ENCODE measurements at regions of chrX and their contacts with region 1.

Region 1: DNA sequence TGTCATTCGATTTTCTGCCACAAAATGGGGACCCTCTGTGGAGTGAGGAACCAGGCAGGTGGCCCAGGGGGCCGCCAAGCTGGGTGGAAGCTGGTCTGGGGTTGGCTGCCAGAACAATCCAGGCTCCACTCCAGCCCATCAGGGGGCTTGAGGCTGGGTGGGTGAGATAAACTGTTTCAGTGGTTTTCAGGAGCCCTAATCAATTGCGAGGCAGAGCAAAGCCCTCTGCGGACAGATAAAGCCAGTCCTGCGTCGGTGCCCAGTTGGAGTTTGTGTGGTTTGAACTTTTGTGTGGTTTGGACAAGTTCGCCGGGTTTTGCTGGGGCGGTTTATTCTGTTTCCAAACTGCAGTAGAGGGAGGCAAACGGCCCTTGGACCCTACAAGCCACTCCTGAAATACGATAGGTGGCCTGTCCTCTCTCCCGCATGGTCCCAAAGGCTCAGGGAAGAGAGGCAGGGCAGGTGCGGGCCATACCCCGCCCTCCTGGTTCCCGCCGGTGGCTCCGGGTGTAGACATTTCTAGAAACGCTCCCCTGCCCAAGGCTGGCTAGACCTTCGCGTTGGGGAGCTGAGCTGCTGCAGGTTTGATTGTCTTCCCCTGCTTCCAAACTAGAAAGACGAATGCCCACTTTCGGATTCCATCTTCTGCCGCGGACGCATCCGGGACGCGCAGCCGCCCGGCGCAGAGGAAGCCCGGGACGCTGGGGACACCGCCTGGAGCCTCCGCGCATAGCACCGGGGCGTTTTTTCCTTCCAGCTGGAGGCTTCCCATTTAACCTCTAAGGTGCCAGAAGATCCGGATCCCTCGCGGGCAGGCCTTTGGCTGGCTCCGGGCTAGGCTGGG is 169.0 kb upstream of the BCOR start:
- DNase-seq: peak; percentile 67 to 84 (median 70)
- ATAC-seq: peak; percentile 84 to 92 (median 90)
- H3K4me3 ChIP-seq: peak overlapping the region; percentile 4 to 63 (median 50)
- H3K27ac ChIP-seq: peak overlapping the region in 11 of 12 donors; percentile 21 to 84 (median 60)
- H3K4me1 ChIP-seq: peaks cover 0 to 31% (median 13%) of the 10 kb centered on the region in 12 donors
- H3K27me3 ChIP-seq: peaks cover 0 to 11% (median 0%) of the 10 kb centered on the region in 9 donors
- CTCF ChIP-seq: peak; percentile 47 to 76 (median 61)
- POLR2A ChIP-seq: no peak

Region 2: GRCh38 chrX:39730662-39731397 is 535.9 kb before region 1 on chrX:
- intact Hi-C with region 1: loop called in 5 of 10 experiments (anchors 5 to 10 kb)
- DNase-seq: peak; percentile 64 to 78 (median 77)
- ATAC-seq: peak; percentile 69 to 90 (median 82)
- H3K4me3 ChIP-seq: no peak overlapping the region
- H3K27ac ChIP-seq: peak overlapping the region in 5 of 12 donors; percentile 34 to 48 (median 38)
- H3K4me1 ChIP-seq: peaks cover 0 to 29% (median 10%) of the 10 kb centered on the region in 12 donors
- H3K27me3 ChIP-seq: peaks cover 0 to 35% (median 0%) of the 10 kb centered on the region in 9 donors
- CTCF ChIP-seq: peak; percentile 36 to 71 (median 58)
- POLR2A ChIP-seq: no peak

Region 3: GRCh38 chrX:40083120-40083978 is 183.4 kb before region 1 on chrX:
- intact Hi-C with region 1: loop called in 1 of 10 experiments (anchors 10 kb)
- DNase-seq: no peak
- ATAC-seq: peak in 3 of 4 donors; percentile 34 to 59 (median 37)
- H3K4me3 ChIP-seq: peak overlapping the region in 10 of 12 donors; percentile 34 to 56 (median 45)
- H3K27ac ChIP-seq: no peak overlapping the region
- H3K4me1 ChIP-seq: peaks cover 0 to 47% (median 22%) of the 10 kb centered on the region in 12 donors
- H3K27me3 ChIP-seq: peaks cover 0 to 60% (median 0%) of the 10 kb centered on the region in 9 donors
- CTCF ChIP-seq: no peak
- POLR2A ChIP-seq: no peak

Region 4: DNA sequence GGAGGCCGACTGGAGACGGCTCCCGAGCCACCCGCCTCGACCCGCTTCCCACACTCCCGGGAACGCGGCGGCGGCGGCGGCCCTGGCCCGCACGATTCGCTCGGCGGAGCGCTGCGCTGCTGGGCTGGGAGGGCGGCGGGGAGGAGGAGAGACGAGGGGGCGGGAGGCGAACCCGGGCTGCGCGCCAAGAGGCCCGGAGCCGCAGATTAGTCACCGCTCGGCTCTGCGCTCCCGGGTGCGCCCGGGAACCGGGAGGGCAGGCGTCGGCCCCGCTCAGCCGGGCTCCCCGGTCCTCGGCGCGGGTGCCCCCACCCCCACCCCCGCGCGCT is 157.8 kb before region 1 on chrX:
- intact Hi-C with region 1: loop called in 1 of 10 experiments (anchors 10 kb)
- DNase-seq: peak; percentile 81 to 88 (median 85)
- ATAC-seq: peak; percentile 49 to 73 (median 68)
- H3K4me3 ChIP-seq: peak overlapping the region; percentile 41 to 88 (median 60)
- H3K27ac ChIP-seq: peak overlapping the region; percentile 81 to 97 (median 94)
- H3K4me1 ChIP-seq: peaks cover 0 to 63% (median 21%) of the 10 kb centered on the region in 12 donors
- H3K27me3 ChIP-seq: peaks cover 0 to 84% (median 0%) of the 10 kb centered on the region in 9 donors
- CTCF ChIP-seq: no peak
- POLR2A ChIP-seq: peak in 1 of 2 donors; percentile 34

Region 5: GRCh38 chrX:40169193-40170101 is 97.3 kb before region 1 on chrX:
- intact Hi-C with region 1: loop called in 5 of 10 experiments (anchors 5 to 10 kb)
- DNase-seq: peak in 4 of 5 donors; percentile 34 to 75 (median 46)
- ATAC-seq: no peak
- H3K4me3 ChIP-seq: peak overlapping the region in 2 of 12 donors; percentile 19 to 43
- H3K27ac ChIP-seq: peak overlapping the region in 2 of 12 donors; percentile 74 to 76
- H3K4me1 ChIP-seq: peaks cover 0 to 56% (median 19%) of the 10 kb centered on the region in 12 donors
- H3K27me3 ChIP-seq: peaks cover 0 to 81% (median 0%) of the 10 kb centered on the region in 9 donors
- CTCF ChIP-seq: peak in 8 of 12 donors; percentile 15 to 35 (median 23)
- POLR2A ChIP-seq: no peak

Region 6: DNA sequence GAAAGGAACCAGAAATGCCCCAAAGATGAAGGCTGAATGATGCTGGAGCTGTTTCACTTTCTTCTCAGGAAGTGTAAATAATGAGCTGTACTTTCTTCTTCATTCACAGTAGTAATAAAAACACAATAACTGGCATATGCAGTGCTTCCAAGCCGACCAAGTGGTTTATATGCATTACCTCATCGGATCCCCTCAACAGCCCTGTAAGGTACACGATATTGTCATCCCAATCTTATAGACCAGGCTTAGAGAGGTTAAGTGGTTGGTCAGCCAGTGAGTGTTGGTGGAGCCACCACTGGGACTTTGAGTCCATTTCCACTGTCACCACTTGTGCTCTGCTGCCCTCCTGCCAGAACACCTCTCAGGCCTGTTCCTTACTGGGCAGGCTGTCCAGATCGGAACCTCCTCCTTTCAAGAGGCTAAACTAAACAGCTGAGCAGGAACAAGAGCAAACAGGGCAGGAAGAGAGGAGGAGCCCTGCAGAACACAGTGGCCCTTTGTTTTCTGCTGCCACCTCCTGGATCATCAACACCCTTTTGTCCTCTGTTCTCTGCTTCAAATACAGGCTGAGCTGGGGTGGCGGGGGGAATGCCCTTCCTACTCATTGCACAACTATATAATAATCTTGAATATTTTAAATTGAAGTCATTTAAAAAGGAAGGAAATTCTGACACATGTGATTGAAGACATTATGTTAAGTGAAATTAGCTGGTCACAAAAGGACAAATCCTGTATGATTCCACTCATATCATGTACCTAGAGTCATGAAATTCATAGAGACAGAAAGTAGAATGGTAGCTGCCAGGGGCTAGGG is 201.5 kb after region 1 on chrX:
- intact Hi-C with region 1: loop called in 1 of 10 experiments (anchors 5 kb)
- DNase-seq: peak; percentile 37 to 53 (median 51)
- ATAC-seq: peak; percentile 89 to 94 (median 91)
- H3K4me3 ChIP-seq: no peak overlapping the region
- H3K27ac ChIP-seq: peak overlapping the region in 4 of 12 donors; percentile 9 to 30 (median 19)
- H3K4me1 ChIP-seq: peaks cover 0 to 21% (median 3%) of the 10 kb centered on the region in 12 donors
- H3K27me3 ChIP-seq: peaks cover 0 to 23% (median 0%) of the 10 kb centered on the region in 9 donors
- CTCF ChIP-seq: peak in 10 of 12 donors; percentile 7 to 49 (median 38)
- POLR2A ChIP-seq: no peak

Measured in heart left ventricle (tissue), 16 donors.